Psoas muscle (tissue), 8 donors: ENCODE measurements at regions of chr7 and their contacts with region 1.

Region 1: GRCh38 chr7:91034459-91035368 is 229.5 kb upstream of the FZD1 start:
- DNase-seq: no peak
- ATAC-seq: peak; percentile 63 to 84 (median 72)
- H3K4me3 ChIP-seq: no peak overlapping the region
- H3K27ac ChIP-seq: no peak overlapping the region
- H3K4me1 ChIP-seq: no peaks in the 10 kb centered on the region
- H3K27me3 ChIP-seq: no peaks in the 10 kb centered on the region
- CTCF ChIP-seq: peak; percentile 77

Region 2: DNA sequence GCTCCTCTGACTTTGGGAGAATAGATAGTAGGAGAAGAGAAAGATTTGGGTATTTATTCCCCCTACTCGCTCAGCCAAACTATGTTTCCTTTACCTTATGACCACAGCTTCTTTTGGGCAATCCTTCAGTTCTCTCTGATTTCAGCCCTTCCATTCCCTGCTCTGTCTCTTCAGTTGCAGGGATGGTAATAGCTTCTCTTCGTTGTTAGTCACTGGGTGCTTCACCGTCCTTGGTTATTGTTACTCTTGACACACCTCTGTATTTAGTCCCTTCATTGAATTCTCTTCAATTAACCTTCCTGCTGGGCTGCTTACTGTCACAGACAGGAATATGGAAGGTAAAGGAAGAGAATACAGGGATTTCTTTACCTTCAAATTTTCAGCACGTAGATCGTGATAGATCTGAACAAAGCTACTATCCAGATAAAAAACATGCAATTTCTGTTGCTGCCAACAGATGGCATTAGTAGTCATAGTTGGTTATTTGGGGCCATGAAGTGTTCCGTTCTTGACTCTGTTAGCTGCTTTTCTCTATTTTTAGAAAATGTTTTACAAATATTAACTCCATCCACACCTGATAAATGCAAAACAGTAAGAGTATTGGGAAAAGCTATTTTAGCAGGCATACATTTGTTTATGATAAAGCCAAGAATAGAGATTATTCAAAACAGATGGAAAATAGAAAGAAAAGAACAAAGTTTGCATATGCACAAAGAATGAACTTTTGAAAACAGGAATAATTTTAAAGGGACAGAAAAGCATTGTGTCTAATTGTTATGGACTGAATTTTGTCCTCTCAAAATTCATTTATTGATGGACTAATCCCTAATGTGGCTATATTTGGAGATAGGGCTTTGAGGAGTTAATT is 579.3 kb before region 1 on chr7:
- intact Hi-C with region 1: loop called (anchors 2 to 5 kb)
- DNase-seq: no peak
- ATAC-seq: peak in 3 of 4 donors; percentile 49 to 83 (median 59)
- H3K4me3 ChIP-seq: peak overlapping the region; percentile 44
- H3K27ac ChIP-seq: no peak overlapping the region
- H3K4me1 ChIP-seq: no peaks in the 10 kb centered on the region
- H3K27me3 ChIP-seq: no peaks in the 10 kb centered on the region
- CTCF ChIP-seq: peak; percentile 76

Region 3: DNA sequence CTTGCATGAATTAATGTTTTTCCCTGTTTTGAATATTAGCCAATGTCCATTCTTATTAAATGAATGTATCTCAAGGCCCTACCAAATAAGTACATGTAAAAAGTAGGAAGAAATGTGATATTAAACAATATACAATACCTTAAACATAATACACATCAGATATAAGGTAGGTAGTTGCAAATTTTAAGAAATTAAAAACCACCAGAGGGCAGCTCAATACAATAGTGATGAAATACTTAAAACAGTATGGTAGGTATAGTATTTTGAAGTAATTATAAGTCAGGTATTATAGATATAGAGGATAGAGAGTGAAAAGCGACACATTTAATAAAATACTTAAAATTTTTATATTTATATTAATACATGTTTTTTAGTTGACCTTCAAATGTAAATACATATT is 482.2 kb before region 1 on chr7:
- intact Hi-C with region 1: loop called (anchors 1 to 10 kb)
- DNase-seq: no peak
- ATAC-seq: no peak
- H3K4me3 ChIP-seq: no peak overlapping the region
- H3K27ac ChIP-seq: no peak overlapping the region
- H3K4me1 ChIP-seq: no peaks in the 10 kb centered on the region
- H3K27me3 ChIP-seq: no peaks in the 10 kb centered on the region
- CTCF ChIP-seq: peak; percentile 53

Region 4: DNA sequence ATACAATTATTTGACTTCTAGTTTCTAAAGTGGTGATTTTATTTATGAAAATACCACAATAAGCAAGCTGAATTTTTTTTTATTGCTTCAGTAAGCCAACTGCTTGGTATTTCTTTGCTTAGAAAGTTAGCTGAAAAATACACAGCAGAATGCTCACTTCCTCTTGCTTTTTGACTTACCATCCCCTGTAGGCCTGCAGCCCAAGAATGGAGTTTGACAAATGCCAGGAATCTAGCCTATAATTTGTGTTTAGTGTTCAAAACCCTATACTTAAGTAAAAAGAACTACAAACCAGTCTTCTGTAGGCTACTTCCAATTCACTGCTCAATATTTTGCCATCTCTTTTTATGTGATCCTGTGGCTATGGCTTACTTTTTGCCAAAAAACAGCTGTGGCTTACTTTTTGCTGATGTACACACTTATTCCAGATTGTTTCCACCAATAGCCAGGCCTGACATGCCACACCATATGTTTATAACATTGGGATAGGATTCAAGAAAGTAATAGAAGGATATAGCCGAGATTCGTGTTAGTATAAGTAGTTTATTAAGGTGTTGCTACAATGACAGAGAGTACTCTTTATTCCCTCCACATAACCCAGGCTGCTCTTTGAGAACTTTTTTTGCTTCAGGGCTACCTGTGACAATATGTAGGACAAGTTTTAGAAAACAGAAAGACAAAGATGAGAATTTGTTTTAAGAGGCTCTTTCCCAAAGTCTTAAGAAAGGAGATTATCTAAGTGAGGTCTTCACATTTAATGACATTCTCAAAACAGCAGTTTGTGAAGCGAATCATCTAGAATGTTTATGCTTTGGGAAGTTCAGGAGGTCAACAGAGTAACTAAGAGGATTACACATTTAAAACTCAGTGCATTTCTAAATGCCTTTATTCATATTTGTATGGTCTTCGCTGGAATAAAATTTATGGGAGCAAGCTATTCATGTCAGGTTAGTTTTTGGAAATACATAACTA is 34.4 kb before region 1 on chr7:
- intact Hi-C with region 1: no loop called
- DNase-seq: no peak
- ATAC-seq: no peak
- H3K4me3 ChIP-seq: no peak overlapping the region
- H3K27ac ChIP-seq: no peak overlapping the region
- H3K4me1 ChIP-seq: no peaks in the 10 kb centered on the region
- H3K27me3 ChIP-seq: no peaks in the 10 kb centered on the region
- CTCF ChIP-seq: no peak

Region 5: DNA sequence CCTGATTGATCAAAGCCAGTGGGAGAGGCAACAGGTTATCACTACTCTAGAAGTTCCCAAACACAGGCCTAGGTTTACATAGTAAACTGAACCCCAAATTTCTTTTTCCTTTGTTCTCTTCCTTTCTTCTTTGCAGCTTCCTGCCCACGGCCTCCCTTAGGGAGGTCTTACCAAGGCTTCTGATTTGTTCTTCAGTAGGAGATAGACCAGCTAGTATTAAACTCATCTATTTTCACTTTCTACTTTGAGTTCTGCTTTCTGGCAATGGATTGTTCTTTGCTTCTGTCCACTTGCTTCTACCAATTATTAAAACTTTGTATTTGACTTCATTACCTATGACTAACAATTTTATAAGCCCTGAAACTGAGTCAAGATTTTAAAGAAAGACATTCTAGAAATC is 21.6 kb before region 1 on chr7:
- intact Hi-C with region 1: no loop called
- DNase-seq: no peak
- ATAC-seq: no peak
- H3K4me3 ChIP-seq: no peak overlapping the region
- H3K27ac ChIP-seq: no peak overlapping the region
- H3K4me1 ChIP-seq: no peaks in the 10 kb centered on the region
- H3K27me3 ChIP-seq: no peaks in the 10 kb centered on the region
- CTCF ChIP-seq: no peak

Region 6: DNA sequence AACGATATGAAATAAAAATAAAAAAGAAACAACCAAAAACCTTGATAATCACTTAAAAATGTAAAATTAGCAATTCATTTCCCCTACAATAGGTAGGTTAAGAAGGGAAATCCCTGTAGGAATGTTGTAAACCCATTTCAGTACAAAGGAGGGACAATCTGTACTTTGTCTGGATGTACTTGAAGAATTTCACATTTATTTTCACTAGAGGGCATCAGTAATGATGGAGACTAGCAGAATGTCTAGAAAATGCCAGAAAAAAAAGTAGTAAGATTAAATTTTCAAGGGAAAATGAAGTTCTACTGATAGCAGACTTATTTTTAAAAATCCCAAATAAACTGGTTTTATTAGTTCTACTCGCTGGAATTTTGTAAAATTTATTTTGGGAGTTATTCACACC is 20.5 kb after region 1 on chr7:
- intact Hi-C with region 1: no loop called
- DNase-seq: no peak
- ATAC-seq: no peak
- H3K4me3 ChIP-seq: no peak overlapping the region
- H3K27ac ChIP-seq: no peak overlapping the region
- H3K4me1 ChIP-seq: no peaks in the 10 kb centered on the region
- H3K27me3 ChIP-seq: no peaks in the 10 kb centered on the region
- CTCF ChIP-seq: no peak

Region 7: DNA sequence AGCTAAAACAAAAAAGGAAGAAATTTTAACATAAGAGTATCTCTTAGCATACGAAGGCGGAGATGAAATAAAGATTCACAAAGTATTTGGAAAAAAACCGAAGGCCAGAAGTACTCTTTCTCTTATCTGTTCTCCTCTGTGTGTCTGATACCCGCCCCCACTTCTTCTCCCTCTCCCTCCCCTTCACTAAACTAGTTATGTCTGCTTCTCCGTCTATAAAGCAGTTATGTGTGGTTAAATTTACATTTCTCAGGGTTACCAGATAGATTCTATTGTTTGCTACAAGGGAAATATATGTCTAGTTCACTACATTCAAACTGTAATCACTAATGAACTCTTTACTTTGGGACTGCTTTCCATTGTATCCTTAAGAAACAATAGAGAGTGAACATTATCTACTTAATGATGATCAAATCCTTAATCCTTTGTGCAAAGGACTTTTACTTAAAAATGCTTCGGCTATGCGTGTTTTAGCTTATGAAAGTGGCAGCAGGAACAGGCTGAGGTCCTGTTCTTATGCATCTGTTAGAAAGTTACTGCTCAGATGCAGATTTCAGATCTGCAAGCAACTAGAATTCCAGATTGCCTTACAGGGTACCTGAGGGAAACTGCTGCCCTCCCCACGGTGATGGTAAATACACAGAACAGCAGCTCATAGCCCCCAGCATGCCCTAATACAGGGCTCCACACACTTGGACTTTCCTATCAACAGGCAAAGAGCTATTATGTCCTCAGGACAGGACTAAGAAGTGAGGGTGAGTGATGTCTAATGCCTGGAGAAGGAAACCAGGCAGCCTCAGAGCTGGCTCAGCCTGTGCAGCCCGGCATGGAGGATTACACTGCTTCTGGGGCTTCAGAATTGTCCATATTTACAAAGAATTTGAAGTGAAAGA is 502.8 kb after region 1 on chr7:
- intact Hi-C with region 1: no loop called
- DNase-seq: no peak
- ATAC-seq: no peak
- H3K4me3 ChIP-seq: no peak overlapping the region
- H3K27ac ChIP-seq: no peak overlapping the region
- H3K4me1 ChIP-seq: no peaks in the 10 kb centered on the region
- H3K27me3 ChIP-seq: peaks cover 0 to 2% (median 0%) of the 10 kb centered on the region in 3 donors
- CTCF ChIP-seq: no peak